PC-3 (cell line): ENCODE measurements at regions of chr11 and their contacts with region 1.

Region 1: GRCh38 chr11:94504689-94505293 is 7.5 kb upstream of the C11orf97 start:
- DNase-seq: peak; percentile 90
- ATAC-seq: peak; percentile 62
- H3K4me3 ChIP-seq: no peak overlapping the region
- H3K27ac ChIP-seq: no peak overlapping the region
- H3K4me1 ChIP-seq: no peaks in the 10 kb centered on the region; the same call in 1 of the 2 replicates
- H3K27me3 ChIP-seq: no peaks in the 10 kb centered on the region
- CTCF ChIP-seq: peak; percentile 86

Region 2: DNA sequence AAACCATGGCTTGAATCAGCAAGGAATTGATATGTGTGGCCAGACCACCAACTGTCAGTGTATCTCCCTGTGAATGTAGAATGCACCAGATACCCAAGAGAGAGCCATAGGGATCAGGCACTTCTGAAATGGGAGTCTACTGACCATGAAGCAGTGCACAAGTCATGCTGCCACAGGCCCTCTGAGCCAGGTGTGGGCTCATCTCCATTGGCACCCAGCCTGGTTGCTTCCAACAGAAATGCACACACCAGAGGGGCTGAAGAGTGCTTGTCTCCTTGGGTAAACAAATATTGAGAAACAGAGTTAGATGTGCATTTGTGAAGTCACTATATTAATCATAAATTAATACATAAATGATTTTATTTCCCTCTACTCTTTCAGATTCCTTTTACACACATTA is 404.5 kb before region 1 on chr11:
- CTCF ChIA-PET with region 1: no interaction called
- POLR2A ChIA-PET with region 1: no interaction called
- intact Hi-C with region 1: no loop called
- DNase-seq: peak; percentile 23
- ATAC-seq: no peak
- H3K4me3 ChIP-seq: no peak overlapping the region
- H3K27ac ChIP-seq: no peak overlapping the region
- H3K4me1 ChIP-seq: no peaks in the 10 kb centered on the region
- H3K27me3 ChIP-seq: no peaks in the 10 kb centered on the region
- CTCF ChIP-seq: no peak

Region 3: GRCh38 chr11:94183886-94184264 is 320.9 kb before region 1 on chr11:
- CTCF ChIA-PET with region 1: no interaction called
- POLR2A ChIA-PET with region 1: no interaction called
- intact Hi-C with region 1: loop called (anchors 1 kb)
- DNase-seq: peak; percentile 89
- ATAC-seq: peak; percentile 81
- H3K4me3 ChIP-seq: no peak overlapping the region; the same call in 1 of the 2 replicates
- H3K27ac ChIP-seq: no peak overlapping the region
- H3K4me1 ChIP-seq: peaks cover 4% of the 10 kb centered on the region; the same call in 1 of the 2 replicates
- H3K27me3 ChIP-seq: no peaks in the 10 kb centered on the region
- CTCF ChIP-seq: peak; percentile 99

Region 4: GRCh38 chr11:94297985-94298576 is 206.7 kb before region 1 on chr11:
- CTCF ChIA-PET with region 1: no interaction called
- POLR2A ChIA-PET with region 1: no interaction called
- intact Hi-C with region 1: loop called (anchors 10 kb)
- DNase-seq: peak; percentile 24
- ATAC-seq: peak; percentile 40; the same call in 1 of the 2 replicates
- H3K4me3 ChIP-seq: no peak overlapping the region
- H3K27ac ChIP-seq: no peak overlapping the region
- H3K4me1 ChIP-seq: no peaks in the 10 kb centered on the region
- H3K27me3 ChIP-seq: peaks cover 31% of the 10 kb centered on the region
- CTCF ChIP-seq: peak; percentile 49

Region 5: GRCh38 chr11:94325681-94326080 is 179.1 kb before region 1 on chr11:
- CTCF ChIA-PET with region 1: no interaction called
- POLR2A ChIA-PET with region 1: no interaction called
- intact Hi-C with region 1: loop called (anchors 1 kb)
- DNase-seq: peak; percentile 75
- ATAC-seq: peak; percentile 69
- H3K4me3 ChIP-seq: no peak overlapping the region
- H3K27ac ChIP-seq: no peak overlapping the region
- H3K4me1 ChIP-seq: peaks cover 3% of the 10 kb centered on the region
- H3K27me3 ChIP-seq: no peaks in the 10 kb centered on the region
- CTCF ChIP-seq: peak; percentile 78